ENCODE measurements at regions of chr7 and their contacts with region 1.

Region 1: GRCh38 chr7:37284805-37285231 is 163.8 kb downstream of the ELMO1 start:
- DNase-seq: peak; percentile 24
- ATAC-seq: peak; percentile 79
- H3K4me3 ChIP-seq: no peak overlapping the region
- H3K27ac ChIP-seq: no peak overlapping the region
- H3K4me1 ChIP-seq: no peaks in the 10 kb centered on the region
- H3K27me3 ChIP-seq: no peaks in the 10 kb centered on the region
- CTCF ChIP-seq: peak; percentile 45 to 89 (median 77); a peak in 5 of 6 replicates
- POLR2A ChIP-seq: no peak
- RAD21 ChIP-seq: peak; percentile 63

Region 2: GRCh38 chr7:37352974-37353948 is 68.4 kb after region 1 on chr7:
- CTCF ChIA-PET with region 1: interaction called, 5 read pairs
- POLR2A ChIA-PET with region 1: no interaction called
- RAD21 ChIA-PET with region 1: no interaction called
- intact Hi-C with region 1: loop called (anchors 1 kb)
- DNase-seq: peak; percentile 15
- ATAC-seq: peak; percentile 82
- H3K4me3 ChIP-seq: no peak overlapping the region
- H3K27ac ChIP-seq: no peak overlapping the region
- H3K4me1 ChIP-seq: no peaks in the 10 kb centered on the region
- H3K27me3 ChIP-seq: peaks cover 8% of the 10 kb centered on the region; the same call in 1 of the 2 replicates
- CTCF ChIP-seq: peak; percentile 48 to 68 (median 63); a peak in 5 of 6 replicates
- POLR2A ChIP-seq: no peak
- RAD21 ChIP-seq: peak; percentile 66